HEK293T (cell line): ENCODE measurements at regions of chr16 and their contacts with region 1.

Region 1: GRCh38 chr16:30637942-30638341 is 12.8 kb upstream of the PRR14 start:
- DNase-seq: peak; percentile 48

Region 2: DNA sequence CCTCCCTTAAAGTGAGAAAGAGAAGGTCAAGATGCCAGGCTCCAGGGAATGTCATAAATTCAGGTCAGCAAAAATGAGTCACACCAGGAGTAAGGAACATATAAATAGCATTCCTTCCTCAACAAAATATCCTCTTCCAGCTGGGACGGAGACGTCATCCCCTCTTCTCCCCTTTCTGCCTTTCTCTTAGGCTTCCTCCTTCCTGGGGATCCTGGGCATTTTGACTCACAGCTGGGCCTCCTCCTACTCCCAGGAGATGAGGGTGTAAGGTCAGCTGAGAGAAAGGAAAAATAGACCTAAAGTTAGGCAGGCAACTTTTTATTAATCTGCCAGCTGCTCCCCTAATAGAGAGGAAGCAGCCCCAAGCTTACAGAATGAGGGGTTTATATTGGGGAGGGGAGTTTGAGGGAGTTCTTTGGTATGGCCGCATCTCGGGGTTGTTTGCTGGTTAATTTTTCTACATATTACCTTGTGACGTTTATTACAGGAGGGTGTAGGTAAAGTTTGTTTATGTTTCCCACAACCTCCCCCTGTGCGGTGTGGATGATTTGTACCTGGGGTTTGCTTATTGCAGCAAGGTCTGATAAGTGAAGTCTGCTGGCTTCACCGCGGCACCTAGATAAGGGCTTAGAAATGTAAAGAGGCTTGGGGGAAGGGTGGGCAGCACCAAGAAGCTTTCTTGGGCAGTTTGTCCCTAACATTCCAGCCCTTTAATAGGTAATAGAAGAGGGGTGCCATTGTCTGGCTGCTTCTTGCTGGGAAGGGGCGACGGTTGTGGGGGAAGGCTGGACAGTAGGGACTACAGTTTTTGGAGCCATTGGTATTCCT is 96.2 kb before region 1 on chr16:
- CTCF ChIA-PET with region 1: no interaction called
- POLR2A ChIA-PET with region 1: no interaction called
- DNase-seq: no peak

Region 3: DNA sequence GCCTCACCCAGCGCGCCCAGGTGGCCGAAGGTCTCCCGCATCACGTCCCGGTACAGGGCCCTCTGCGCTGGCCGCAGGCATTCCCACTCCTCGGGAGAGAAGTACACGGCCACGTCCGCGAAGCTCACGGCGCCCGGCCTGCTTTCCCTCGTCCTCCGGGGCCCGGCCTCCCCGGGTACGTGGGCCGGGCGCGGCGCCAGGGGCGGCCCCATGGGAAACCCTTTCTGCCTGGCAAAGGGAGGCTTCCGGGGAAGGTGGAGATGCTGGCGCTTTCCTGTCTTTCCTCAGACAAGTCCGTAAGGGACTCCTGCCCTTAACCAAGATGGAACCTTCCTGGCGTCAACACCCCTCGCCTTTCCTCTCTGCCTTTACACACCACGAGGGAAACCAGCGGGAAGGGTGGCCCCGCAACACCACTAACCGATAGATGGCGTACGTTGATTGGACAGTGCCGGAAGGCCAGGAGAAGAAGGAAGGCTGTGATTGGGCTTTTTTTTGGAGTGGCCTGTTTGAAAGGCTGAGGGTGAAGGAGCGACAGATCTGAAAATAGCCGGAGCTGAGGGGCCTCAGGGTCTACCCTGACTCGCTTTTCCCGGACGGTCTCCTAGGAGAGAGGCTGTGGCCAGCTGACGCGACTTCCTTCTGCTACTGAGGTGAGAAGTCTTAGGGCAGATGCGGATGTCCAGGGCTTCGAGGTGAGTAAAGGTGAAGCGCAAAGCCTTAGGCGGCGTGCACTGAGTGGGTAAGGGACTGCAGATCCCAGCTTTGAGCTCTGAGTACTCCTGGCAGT is 52.3 kb before region 1 on chr16 and contains the start of gene ZNF785:
- CTCF ChIA-PET with region 1: no interaction called
- POLR2A ChIA-PET with region 1: no interaction called
- DNase-seq: peak; percentile 23

Region 4: DNA sequence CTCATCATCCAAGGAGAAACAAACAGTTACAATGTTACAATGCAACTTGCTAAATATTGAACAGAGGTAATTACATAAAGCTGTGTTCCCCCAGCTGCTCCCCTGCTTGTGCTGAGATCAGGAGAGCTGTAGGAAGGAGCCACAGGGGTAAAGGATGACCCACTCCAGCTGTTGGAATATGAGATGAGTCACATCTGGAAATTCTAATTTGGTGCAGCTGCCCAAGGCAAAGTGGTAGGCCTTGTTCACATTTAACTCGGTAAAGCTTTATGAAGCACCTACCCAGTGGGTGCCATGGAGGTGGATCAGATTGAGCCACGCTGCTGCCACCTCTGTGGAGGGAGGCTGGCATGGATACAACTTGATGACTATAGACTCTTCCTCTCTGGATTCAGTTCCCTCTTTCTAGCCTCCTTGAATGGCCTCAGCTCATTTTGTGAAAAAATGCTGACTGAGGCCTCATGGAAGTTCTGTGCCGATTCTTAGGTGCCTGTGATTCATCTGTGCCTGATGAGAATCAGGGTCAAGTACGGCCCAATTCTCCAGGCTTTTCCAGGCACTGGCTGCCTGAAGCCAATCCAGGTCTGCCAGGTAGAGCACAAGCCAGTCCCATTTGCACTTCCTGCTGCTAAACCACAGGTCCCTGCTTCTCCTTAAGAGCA is 35.2 kb before region 1 on chr16:
- CTCF ChIA-PET with region 1: no interaction called
- POLR2A ChIA-PET with region 1: interaction called, 11 read pairs
- DNase-seq: no peak

Region 5: GRCh38 chr16:30609926-30610839 is 27.8 kb before region 1 on chr16 and contains the start of gene ZNF689:
- CTCF ChIA-PET with region 1: interaction called, 10 read pairs
- POLR2A ChIA-PET with region 1: interaction called, 19 read pairs
- DNase-seq: peak; percentile 100

Region 6: GRCh38 chr16:30615358-30616091 is 22.4 kb before region 1 on chr16:
- CTCF ChIA-PET with region 1: interaction called, 10 read pairs
- POLR2A ChIA-PET with region 1: interaction called, 19 read pairs
- DNase-seq: peak; percentile 83

Region 7: DNA sequence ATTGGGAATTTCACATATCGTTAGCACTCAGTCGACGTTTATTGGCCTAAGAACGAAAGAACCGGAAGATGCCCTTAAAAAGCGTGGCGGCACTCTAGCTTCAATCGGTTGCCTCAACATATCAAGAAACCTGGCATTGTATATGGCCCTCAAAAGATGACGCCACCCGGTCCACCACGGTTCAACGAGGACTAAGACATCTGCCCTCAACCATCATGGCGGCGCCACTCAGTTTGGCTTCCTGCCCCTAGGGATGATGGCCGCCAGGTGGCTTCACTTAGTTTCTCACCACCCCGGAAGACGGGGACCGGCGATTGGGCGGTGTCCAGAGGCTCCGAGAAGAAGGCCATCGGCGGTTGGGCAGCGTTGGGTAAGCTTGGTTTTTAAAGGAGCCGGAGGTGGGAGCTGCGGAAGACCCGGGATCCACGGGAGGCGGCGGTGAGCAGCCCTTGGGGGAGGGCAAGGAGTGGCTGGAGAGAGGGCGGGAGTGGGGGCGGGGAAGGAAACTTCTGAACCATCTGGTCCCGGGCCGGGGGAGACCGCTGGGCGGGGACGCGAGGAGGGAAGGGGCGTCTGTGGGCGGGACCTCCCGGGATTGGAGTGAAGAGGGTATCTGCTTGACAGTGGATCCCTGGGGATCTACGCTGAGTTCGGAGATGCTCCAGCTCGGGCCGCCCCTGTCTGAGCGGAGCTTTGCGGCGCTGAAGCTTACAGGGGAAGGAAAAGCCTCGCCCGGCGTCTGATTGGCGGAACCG is 12.6 kb after region 1 on chr16 and contains the start of gene PRR14:
- CTCF ChIA-PET with region 1: interaction called, 7 read pairs
- POLR2A ChIA-PET with region 1: interaction called, 27 read pairs
- DNase-seq: peak; percentile 99

Region 8: GRCh38 chr16:30657866-30658730 is 20.2 kb after region 1 on chr16 and contains the start of gene FBRS:
- CTCF ChIA-PET with region 1: no interaction called
- POLR2A ChIA-PET with region 1: interaction called, 29 read pairs
- DNase-seq: peak; percentile 100

Region 9: DNA sequence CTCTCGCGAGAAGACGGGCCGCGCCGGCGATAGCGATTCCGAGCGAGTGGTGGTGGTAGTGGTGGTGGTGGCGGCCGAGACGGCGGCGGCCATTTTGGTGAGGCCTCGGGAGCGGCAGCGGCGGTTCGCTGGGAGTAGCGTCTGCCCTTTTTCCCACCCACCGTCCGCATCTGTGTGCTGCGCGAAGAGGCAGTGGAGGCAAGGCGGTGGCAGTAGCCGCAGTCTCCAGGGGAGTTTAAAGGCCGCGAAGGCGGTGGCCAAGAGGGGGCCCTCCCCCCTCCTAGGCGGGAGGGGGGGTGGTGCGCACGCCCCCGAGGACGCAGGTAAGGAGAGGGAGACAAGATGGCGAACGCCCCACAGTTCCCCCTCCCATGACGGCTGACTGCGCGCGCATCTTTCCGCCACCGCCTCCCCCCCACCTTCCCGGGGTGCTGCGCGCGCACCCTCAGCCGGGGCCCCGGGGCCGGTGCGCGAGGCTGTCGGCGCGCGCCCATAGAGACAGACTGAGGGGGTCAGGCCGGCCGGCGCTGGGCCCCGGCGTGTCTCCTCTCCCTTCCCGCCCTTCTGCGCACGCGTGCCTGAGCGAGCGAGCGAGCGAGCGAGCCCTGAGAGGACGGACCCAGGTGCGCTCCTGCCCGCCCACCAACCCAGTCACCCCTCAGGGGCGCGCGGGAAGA is 60.3 kb after region 1 on chr16:
- CTCF ChIA-PET with region 1: no interaction called
- POLR2A ChIA-PET with region 1: interaction called, 11 read pairs
- DNase-seq: peak; percentile 99

Region 10: GRCh38 chr16:30747799-30748634 is 110.1 kb after region 1 on chr16 and contains the start of gene PHKG2:
- CTCF ChIA-PET with region 1: no interaction called
- POLR2A ChIA-PET with region 1: no interaction called
- DNase-seq: peak; percentile 100

Region 11: DNA sequence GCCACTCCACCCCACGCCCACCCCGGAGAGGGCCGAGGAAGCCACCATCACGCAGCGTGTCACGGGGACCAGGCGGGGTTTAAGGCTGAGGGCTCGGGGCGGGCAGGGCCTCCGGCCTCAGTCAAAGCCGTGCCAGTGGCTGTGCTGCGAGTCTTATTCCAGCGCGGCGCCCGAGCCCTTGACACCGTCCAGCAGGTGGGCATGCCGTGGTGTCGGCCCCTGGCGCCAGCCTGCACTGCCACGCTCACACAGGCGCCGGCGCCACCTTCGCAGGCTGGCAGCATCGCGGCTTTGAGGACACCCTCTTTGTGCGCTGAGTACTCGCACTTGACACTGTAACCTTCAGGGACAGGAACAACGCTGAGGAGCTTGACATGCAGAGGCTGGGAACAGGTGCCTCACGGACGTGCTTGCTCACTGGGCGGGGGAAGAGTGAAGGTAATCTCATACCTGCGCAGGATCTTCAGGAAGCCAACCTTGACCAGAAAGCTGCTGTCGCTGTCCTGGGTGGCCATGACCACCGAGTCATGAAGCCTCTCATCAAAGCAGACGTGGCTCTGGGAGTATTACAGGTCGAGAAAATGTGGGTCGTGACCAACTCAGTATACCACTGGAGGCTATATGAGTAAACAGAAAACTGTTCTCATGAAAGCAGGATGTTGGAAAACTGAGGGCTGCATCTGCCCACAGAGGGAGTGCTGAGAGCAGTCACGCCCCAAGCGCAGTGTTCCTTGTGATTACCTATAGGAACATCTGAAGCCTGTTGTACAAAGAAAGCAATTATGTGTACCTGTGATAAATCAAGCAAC is 183.2 kb after region 1 on chr16:
- CTCF ChIA-PET with region 1: no interaction called
- POLR2A ChIA-PET with region 1: no interaction called
- DNase-seq: no peak